Ascending aorta (tissue), 2 donors: ENCODE measurements at regions of chr16 and their contacts with region 1.

Region 1: DNA sequence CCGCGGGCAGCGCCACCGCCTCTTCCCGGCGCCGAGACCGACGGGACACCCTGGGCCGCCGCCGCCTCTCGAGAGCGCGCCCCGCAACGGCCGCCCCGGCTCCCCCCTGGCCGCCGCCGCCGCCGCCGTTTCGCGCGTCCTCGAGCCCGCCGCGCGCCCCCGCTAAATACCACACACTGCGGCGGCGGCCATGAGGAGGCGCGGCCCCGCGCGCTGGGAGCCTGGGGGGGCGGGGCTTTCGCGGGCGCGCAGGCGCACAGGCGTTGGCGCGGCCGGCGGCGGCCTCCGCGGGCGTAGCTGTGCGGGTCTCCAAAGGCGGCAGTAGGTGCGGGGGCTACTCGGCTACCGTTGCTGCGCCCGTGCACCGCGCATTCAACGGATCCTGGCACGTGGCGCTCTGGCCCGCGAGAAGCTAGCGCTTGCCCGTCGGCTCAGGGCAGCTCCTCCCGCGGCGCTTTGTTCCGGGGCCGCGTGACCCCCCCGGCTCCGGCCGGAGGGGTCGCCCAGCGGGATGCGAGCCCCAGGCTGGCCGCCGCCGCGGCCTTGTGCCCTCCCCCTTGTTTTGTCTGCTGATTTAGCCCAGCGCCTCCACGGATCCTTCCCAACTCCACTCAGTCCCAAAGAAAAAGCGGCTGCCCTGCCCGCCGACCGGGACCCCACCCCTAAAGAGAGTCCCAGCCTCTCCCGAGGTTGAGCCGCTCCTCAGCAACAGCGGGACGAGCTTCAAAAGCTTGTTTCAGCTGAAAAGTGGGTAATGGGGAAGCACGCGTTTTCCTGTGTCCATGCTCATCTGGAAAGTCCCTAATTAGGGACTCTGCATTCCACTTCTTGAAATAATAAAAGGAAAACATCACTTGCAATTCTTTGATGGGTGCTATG is at the start of gene SIAH1:
- DNase-seq: peak; percentile 22 to 90
- H3K4me3 ChIP-seq: peak within 1 kb of the TSS; percentile 96 to 100
- H3K27ac ChIP-seq: peak within 1 kb of the TSS; percentile 96 to 100
- H3K4me1 ChIP-seq: peaks cover 9 to 22% of the 10 kb centered on the region in 2 donors
- H3K27me3 ChIP-seq: no peaks in the 10 kb centered on the region
- CTCF ChIP-seq: peak in 1 of 3 experiments; percentile 7
- total RNA-seq, gene SIAH1: 11.3 TPM

Region 2: GRCh38 chr16:46830902-46831647 is 1554.4 kb before region 1 on chr16 and contains the start of gene C16orf87:
- intact Hi-C with region 1: loop called (anchors 5 kb)
- DNase-seq: peak; percentile 80 to 94
- H3K4me3 ChIP-seq: peak within 1 kb of the TSS; percentile 90 to 94
- H3K27ac ChIP-seq: peak within 1 kb of the TSS; percentile 72 to 94
- H3K4me1 ChIP-seq: peaks cover 2 to 5% of the 10 kb centered on the region in 2 donors
- H3K27me3 ChIP-seq: no peaks in the 10 kb centered on the region
- CTCF ChIP-seq: no peak
- total RNA-seq, gene C16orf87: under 0.01 TPM

Region 3: DNA sequence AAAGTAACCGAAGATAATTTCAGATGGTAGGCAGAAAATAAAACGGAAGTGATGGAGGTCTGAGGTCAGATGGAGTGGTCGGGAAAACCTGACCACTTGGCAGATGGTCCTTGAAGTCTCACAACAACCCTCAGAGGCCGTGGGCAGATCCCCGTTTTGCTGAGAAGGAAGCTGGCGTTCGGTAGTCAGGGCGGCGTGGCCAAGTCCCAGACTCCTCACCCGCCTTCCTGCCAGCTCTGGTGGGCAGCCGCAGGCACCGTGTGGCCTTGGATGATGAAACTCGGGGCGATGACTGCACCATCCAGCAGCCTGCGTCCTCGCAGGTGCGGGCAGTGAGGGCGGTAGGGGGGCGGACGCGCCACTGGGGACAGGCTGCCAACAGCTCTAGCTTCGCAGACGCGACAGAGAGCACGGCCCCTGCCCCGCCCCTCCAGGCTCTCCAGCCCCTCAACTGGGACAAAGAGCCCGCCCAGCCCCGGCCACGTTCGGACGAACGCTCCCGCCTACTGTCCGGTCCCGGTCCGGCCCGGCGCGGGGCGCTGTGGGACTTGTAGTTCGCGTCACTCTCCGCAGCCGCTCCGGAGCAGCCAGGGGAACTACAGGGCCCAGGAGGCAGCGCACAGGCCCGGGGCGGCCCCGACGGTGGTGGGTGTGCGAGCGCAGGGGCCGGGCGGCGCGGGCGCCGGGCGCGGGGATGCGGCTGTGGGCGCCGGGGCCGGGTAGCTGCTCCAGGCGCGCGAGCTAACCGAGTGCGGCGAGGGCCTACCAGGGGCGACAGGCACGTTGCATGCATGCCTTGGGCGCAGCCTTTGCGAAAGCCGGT is 1501.6 kb before region 1 on chr16 and contains the start of gene GPT2:
- intact Hi-C with region 1: loop called (anchors 5 kb)
- DNase-seq: peak; percentile 87 to 99
- H3K4me3 ChIP-seq: peak within 1 kb of the TSS; percentile 84 to 93
- H3K27ac ChIP-seq: peak within 1 kb of the TSS; percentile 41 to 63
- H3K4me1 ChIP-seq: peaks cover 0 to 6% of the 10 kb centered on the region in 2 donors
- H3K27me3 ChIP-seq: no peaks in the 10 kb centered on the region
- CTCF ChIP-seq: peak in 1 of 3 experiments; percentile 10
- total RNA-seq, gene GPT2: 7.9 TPM

Region 4: GRCh38 chr16:47037746-47038458 is 1347.6 kb before region 1 on chr16:
- intact Hi-C with region 1: loop called (anchors 5 kb)
- DNase-seq: peak; percentile 56 to 94
- H3K4me3 ChIP-seq: peak overlapping the region; percentile 61 to 74
- H3K27ac ChIP-seq: peak overlapping the region in 1 of 2 donors; percentile 19
- H3K4me1 ChIP-seq: no peaks in the 10 kb centered on the region
- H3K27me3 ChIP-seq: no peaks in the 10 kb centered on the region
- CTCF ChIP-seq: peak; percentile 89 to 96 (median 93)

Region 5: GRCh38 chr16:48244080-48244862 is 141.2 kb before region 1 on chr16 and contains the start of gene LONP2:
- intact Hi-C with region 1: loop called (anchors 10 kb)
- DNase-seq: peak; percentile 60 to 93
- H3K4me3 ChIP-seq: peak within 1 kb of the TSS; percentile 75 to 96
- H3K27ac ChIP-seq: peak within 1 kb of the TSS; percentile 81 to 85
- H3K4me1 ChIP-seq: peaks cover 0 to 24% of the 10 kb centered on the region in 2 donors
- H3K27me3 ChIP-seq: no peaks in the 10 kb centered on the region
- CTCF ChIP-seq: no peak
- total RNA-seq, gene LONP2: 70.0 TPM

Region 6: GRCh38 chr16:48365581-48366164 is 19.8 kb before region 1 on chr16:
- intact Hi-C with region 1: loop called (anchors 1 kb)
- DNase-seq: peak; percentile 64 to 93
- H3K4me3 ChIP-seq: peak overlapping the region; percentile 58 to 75
- H3K27ac ChIP-seq: peak overlapping the region; percentile 87 to 90
- H3K4me1 ChIP-seq: peaks cover 5 to 13% of the 10 kb centered on the region in 2 donors
- H3K27me3 ChIP-seq: no peaks in the 10 kb centered on the region
- CTCF ChIP-seq: peak in 1 of 3 experiments; percentile 16

Region 7: GRCh38 chr16:48446539-48446930 is 61.0 kb after region 1 on chr16:
- intact Hi-C with region 1: loop called (anchors 5 kb)
- DNase-seq: no peak
- H3K4me3 ChIP-seq: no peak overlapping the region
- H3K27ac ChIP-seq: no peak overlapping the region
- H3K4me1 ChIP-seq: peaks cover 0 to 7% of the 10 kb centered on the region in 2 donors
- H3K27me3 ChIP-seq: no peaks in the 10 kb centered on the region
- CTCF ChIP-seq: no peak